Right ventricle myocardium inferior (tissue), 1 donor: ENCODE measurements at regions of chr16 and their contacts with region 1.

Region 1: DNA sequence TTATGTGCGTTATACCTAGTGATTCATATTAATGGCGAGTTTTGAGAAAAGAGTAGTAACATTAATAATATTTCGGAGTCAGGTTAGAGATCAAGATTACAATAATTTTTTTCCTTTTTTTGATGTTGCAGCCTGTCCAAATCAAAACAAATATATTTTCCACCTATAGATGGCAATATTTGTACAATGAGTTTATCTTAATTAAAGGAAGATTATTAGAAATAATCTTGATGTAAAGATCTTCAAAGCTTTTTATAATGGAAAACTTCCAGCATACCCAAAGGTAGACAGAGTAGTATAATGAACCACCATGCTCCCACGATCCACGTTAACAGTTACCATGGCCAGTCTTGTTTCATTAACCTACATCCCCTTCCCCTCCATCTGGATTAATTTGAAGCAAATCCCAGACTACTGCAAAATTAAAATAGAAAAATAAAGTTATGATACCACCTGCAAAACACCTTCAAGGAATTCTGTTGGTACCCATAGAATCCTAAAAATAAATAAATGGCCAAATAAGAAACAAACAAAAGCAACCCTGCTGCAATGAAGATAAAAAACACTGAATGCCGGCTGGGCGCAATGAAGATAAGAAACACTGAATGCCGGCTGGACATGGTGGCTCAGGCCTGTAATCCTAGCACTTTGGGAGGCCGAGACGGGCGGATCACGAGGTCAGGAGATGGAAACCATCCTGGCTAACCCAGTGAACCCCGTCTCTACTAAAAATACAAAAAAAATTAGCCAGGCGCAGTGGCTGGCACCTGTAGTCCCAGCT is 46.5 kb upstream of the GINS3 start:
- DNase-seq: no peak
- ATAC-seq: no peak

Region 2: DNA sequence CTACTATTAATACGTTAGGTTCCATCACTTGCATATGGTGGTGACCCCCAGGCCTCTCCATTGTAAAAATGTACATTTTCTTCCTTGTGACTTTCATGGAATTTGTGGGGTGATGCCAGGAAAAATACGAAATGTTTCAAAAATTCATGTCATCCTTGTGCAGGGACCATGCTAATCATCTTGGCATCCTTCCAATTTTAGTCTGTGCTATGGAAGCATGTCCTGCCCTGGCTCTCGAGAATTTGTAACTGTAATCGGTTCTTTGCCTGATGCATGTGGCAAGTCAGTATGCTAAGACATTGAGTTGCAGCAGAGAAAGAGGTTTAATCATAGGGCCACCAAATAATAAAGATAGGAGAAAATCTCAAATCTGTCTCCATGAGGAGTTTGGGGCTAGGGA is 32.2 kb after region 1 on chr16:
- intact Hi-C with region 1: no loop called
- DNase-seq: no peak
- ATAC-seq: no peak

Region 3: GRCh38 chr16:58392215-58393137 is 46.7 kb after region 1 on chr16 and contains the start of gene GINS3:
- intact Hi-C with region 1: loop called (anchors 5 kb)
- DNase-seq: peak; percentile 91
- ATAC-seq: peak; percentile 97
- total RNA-seq, gene GINS3: 6.5 TPM

Region 4: GRCh38 chr16:58425756-58426494 is 80.2 kb after region 1 on chr16:
- intact Hi-C with region 1: loop called (anchors 5 kb)
- DNase-seq: no peak
- ATAC-seq: peak; percentile 24

Region 5: GRCh38 chr16:58755989-58756649 is 410.4 kb after region 1 on chr16:
- intact Hi-C with region 1: no loop called
- DNase-seq: no peak
- ATAC-seq: peak; percentile 94